ENCODE measurements at regions of chrX and their contacts with region 1.

Region 1: DNA sequence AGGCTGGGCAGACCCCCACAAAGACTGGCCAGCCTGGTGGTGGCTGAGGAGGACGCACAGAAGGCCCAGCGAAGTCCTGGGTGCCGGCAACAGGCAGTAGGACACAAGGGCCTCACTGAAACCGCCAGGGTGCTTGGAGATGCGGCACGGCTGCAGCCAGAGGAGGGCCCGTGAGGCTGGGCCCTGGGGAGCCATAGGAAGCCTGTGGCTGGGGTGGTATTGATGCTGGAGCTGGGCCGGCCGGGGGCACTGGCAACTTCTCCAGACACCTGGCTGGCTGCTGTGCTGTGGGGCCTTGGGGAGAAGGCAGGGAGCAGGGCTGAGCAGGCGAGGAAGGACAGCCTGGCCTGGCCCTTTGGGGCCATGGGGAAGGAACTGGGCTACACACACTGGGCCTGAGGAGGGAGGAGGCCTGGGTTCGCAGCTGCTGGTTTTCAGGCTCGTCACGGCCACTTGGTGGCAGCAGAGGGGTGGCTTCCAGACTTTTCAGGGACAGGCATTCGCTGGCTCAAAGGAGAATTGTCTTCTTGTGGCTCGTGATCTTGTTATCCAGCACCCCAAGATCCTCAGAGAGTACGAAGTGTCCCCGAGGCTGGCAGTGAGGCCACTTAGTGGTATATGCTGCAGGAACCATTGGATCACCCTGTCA is 37.2 kb downstream of the ATP2B3 start:
- DNase-seq: peak; percentile 76 to 89 (median 86)
- H3K4me3 ChIP-seq: no peak overlapping the region
- H3K27ac ChIP-seq: peak overlapping the region in 58 of 59 donors; percentile 39 to 97 (median 87)
- H3K27me3 ChIP-seq: peaks cover 0 to 72% (median 13%) of the 10 kb centered on the region in 45 donors
- CTCF ChIP-seq: peak; percentile 35 to 87 (median 77)

Region 2: GRCh38 chrX:153400146-153401127 is 154.2 kb before region 1 on chrX:
- intact Hi-C with region 1: no loop called
- DNase-seq: peak in 1 of 10 donors; percentile 40
- H3K4me3 ChIP-seq: no peak overlapping the region
- H3K27ac ChIP-seq: no peak overlapping the region
- H3K27me3 ChIP-seq: peaks cover 0 to 50% (median 18%) of the 10 kb centered on the region in 45 donors
- CTCF ChIP-seq: peak in 50 of 56 donors; percentile 12 to 53 (median 35)

Region 3: DNA sequence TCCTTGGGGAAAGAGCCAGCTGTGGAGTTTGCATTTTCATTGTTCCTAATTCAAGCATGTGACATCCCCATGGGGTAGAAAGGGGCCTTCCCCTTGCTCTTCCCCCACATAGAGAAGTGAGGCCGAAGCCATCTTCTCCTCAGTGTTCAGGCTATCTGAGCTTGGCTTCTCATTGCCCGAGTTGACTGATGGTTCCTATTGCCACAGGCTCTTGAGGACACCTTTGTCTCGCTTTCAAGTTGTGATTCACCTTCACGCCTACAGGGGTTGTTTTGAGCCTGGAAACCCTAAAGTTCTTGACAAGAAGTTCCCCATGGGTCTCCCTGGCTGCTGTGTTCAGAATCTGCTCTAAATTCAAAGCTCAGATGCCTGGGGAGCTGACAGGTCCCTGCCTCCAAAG is 19.3 kb after region 1 on chrX:
- intact Hi-C with region 1: no loop called
- DNase-seq: no peak
- H3K4me3 ChIP-seq: no peak overlapping the region
- H3K27ac ChIP-seq: peak overlapping the region in 1 of 59 donors; percentile 29
- H3K27me3 ChIP-seq: peaks cover 0 to 79% (median 22%) of the 10 kb centered on the region in 45 donors
- CTCF ChIP-seq: no peak

Region 4: DNA sequence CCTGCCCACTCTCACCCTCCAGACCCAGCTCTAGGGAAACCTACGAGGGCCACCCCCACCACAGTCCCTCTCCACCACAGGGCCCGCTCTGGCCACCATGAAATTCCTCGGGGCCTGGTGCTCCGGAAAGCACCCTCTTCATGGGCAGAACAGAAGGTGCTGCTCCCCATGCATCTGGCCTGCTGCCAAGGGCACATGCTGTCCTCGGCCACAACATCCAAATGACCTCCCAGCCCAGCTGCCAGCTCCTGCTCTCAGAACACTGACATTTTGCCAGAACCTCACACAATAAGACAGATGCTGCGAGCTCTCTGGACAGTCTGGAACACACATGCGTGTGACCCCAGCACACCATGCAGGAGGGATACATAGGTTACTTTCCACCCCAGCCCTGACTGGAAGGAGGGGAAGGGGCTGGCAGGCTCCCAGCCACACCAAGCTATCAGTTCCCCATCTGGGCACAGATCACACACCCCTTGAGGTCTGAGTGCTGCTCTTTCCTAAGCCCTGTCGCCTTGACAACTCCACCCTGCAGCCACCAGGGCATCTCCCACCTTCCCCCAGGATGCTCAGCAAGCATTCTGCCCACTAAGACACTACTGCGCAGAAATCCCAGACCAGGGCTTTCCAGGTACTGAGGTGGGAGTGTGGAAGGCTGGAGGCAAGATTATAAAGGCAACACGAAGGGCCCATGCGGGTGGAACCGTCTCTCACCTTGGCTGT is 38.5 kb after region 1 on chrX:
- intact Hi-C with region 1: loop called in 1 of 2 experiments (anchors 5 kb)
- DNase-seq: peak in 8 of 10 donors; percentile 47 to 81 (median 75)
- H3K4me3 ChIP-seq: peak overlapping the region in 1 of 59 donors; percentile 5
- H3K27ac ChIP-seq: peak overlapping the region in 53 of 59 donors; percentile 5 to 87 (median 63)
- H3K27me3 ChIP-seq: peaks cover 0 to 71% (median 14%) of the 10 kb centered on the region in 45 donors
- CTCF ChIP-seq: no peak

Region 5: DNA sequence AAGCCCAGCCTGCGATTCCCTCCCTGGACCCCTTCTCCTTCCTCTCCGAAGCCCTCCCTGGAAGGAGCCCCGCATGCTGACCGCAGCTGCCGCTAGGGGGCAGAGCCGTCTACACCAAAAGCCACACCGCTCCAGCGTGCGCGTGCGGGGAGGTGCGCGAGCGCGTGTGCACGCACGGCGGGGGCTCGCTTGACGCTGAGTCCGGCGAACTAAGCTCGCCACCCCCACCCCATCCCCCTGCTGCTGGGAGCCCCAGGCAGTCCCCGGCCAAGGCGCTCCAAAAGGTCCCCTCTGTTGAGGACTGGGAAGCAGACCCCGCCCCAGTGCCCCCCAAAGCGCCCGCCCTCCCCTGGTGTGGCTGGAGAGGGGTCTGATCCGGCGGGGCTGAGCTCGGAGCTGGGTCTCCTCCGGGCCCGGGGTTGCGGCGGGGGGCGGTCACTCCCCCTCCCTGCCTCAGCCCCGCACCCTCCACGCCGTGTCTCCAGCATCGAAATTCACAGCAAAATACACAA is 55.3 kb after region 1 on chrX:
- intact Hi-C with region 1: loop called in 1 of 2 experiments (anchors 1 kb)
- DNase-seq: peak; percentile 67 to 85 (median 80)
- H3K4me3 ChIP-seq: peak overlapping the region; percentile 31 to 69 (median 52)
- H3K27ac ChIP-seq: peak overlapping the region in 56 of 59 donors; percentile 29 to 90 (median 78)
- H3K27me3 ChIP-seq: peaks cover 0 to 63% (median 8%) of the 10 kb centered on the region in 45 donors
- CTCF ChIP-seq: peak; percentile 61 to 90 (median 77)

Region 6: GRCh38 chrX:153649178-153649914 is 94.7 kb after region 1 on chrX:
- intact Hi-C with region 1: no loop called
- DNase-seq: peak in 6 of 10 donors; percentile 16 to 43 (median 34)
- H3K4me3 ChIP-seq: no peak overlapping the region
- H3K27ac ChIP-seq: no peak overlapping the region
- H3K27me3 ChIP-seq: peaks cover 0 to 74% (median 42%) of the 10 kb centered on the region in 45 donors
- CTCF ChIP-seq: peak in 16 of 56 donors; percentile 7 to 28 (median 15)

Region 7: GRCh38 chrX:153667956-153668396 is 113.3 kb after region 1 on chrX:
- intact Hi-C with region 1: loop called in 1 of 2 experiments (anchors 5 kb)
- DNase-seq: peak; percentile 85 to 94 (median 91)
- H3K4me3 ChIP-seq: peak overlapping the region in 44 of 59 donors; percentile 4 to 53 (median 33)
- H3K27ac ChIP-seq: peak overlapping the region in 37 of 59 donors; percentile 7 to 78 (median 54)
- H3K27me3 ChIP-seq: peaks cover 0 to 64% (median 18%) of the 10 kb centered on the region in 45 donors
- CTCF ChIP-seq: peak; percentile 46 to 89 (median 79)

Region 8: GRCh38 chrX:153953342-153953830 is 398.7 kb after region 1 on chrX:
- intact Hi-C with region 1: loop called (anchors 10 kb)
- DNase-seq: peak; percentile 68 to 85 (median 74)
- H3K4me3 ChIP-seq: peak overlapping the region in 3 of 59 donors; percentile 4 to 8 (median 5)
- H3K27ac ChIP-seq: peak overlapping the region in 55 of 59 donors; percentile 2 to 85 (median 65)
- H3K27me3 ChIP-seq: peaks cover 0 to 30% (median 0%) of the 10 kb centered on the region in 45 donors
- CTCF ChIP-seq: peak; percentile 79 to 100 (median 98)

Measured in dorsolateral prefrontal cortex (tissue), 120 donors.